Mucosa of descending colon (tissue), 3 donors: ENCODE measurements at regions of chr15 and their contacts with region 1.

Region 1: DNA sequence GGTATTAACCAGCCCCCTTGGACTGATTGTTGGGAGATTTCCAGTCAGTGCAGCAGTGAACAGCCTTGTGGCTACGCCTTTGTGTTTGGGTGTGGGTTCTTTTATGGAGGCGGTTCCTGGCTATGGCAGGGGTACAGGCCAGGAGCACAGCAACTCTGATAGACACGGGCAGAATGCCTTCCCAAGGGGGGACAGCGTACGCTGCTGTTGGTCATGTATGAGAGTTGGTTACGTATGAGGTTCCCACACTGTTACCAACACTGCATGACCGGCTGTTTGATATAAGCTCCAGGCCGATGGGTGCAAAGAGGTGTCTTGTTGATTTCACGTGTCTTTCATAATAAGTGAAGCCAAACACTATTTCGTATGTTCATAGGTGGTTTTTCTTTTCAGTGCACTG is 187.8 kb downstream of the NSMCE3 start:
- DNase-seq: no peak
- ATAC-seq: no peak
- H3K4me3 ChIP-seq: no peak overlapping the region
- H3K4me1 ChIP-seq: no peaks in the 10 kb centered on the region
- CTCF ChIP-seq: no peak

Region 2: GRCh38 chr15:29139540-29140459 is 58.0 kb after region 1 on chr15:
- intact Hi-C with region 1: loop called in 1 of 2 experiments (anchors 2 kb)
- DNase-seq: peak; percentile 52 to 78 (median 66)
- ATAC-seq: peak; percentile 90
- H3K4me3 ChIP-seq: no peak overlapping the region
- H3K4me1 ChIP-seq: no peaks in the 10 kb centered on the region
- CTCF ChIP-seq: peak; percentile 89